Right ventricle myocardium superior (tissue), 1 donor: ENCODE measurements at regions of chr6 and their contacts with region 1.

Region 1: DNA sequence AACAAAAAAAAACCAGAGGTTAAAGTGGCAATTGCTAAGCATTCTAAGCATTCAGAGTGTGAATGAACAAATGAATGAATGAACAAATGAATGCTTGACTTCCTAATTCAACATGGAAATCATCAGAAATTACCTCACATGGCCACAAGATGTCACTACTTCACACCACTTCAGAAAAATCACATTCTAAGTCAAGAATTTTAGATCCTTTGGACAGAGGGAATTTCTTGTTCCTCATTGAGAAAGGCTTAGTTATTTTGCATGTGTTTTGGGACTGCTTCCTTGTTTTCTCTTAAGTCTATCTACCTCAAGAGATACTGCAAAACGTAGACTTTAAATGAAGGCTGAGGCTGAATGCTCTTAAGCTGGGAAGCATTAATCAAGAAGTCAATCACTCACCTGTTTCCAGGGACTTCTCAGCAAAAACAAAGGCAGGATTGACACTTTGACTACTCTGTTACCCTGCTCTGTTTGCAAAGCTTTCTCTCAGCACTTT is 120.2 kb downstream of the MBOAT1 start:
- DNase-seq: no peak
- ATAC-seq: peak; percentile 58

Region 2: DNA sequence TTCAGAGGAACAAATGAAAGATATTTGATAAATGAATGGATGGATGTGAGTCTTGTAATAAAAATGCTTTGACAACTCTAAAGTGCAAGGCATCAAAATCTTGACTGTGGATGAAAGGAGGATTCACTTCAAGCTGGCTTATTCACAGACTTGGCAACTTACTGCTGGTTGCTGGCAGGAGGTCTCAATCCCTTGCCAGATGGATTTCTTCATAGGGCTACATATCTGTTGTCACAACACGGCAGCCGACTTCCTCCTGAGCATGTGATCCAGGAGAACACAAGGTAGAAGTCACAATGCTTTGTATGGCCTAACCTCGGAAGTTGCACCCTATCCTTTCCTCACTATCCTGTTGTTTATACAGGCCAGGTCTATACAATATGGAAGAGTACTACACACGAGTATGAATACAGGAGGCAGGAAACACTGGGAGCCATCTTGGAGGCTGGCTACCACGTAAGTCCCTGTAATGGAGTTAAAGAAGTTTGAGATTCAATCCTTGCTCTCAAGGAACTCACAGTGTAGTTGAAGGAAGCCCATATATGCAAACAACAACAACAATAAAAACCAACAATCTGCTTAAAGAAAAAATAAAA is 157.0 kb before region 1 on chr6:
- intact Hi-C with region 1: no loop called
- DNase-seq: no peak
- ATAC-seq: no peak

Region 3: DNA sequence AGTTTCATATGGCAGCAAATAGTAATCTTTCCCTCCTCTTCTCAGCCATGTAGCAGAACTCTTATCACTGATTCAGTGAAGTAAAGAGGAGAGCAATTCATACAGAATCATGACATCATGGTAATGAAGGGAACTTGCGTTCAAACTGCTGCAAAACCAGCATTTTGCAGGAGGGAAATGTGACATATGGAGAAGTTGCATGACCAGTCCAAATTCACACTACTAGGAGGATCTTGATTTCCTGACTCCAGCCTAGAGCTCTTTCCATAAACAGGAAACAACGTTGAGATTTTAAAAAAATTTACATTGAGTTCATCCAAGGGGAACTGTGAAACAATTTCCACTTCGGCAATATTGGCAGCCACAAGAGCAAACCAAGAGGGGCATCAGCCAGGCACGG is 56.3 kb after region 1 on chr6:
- intact Hi-C with region 1: no loop called
- DNase-seq: no peak
- ATAC-seq: peak; percentile 45

Region 4: DNA sequence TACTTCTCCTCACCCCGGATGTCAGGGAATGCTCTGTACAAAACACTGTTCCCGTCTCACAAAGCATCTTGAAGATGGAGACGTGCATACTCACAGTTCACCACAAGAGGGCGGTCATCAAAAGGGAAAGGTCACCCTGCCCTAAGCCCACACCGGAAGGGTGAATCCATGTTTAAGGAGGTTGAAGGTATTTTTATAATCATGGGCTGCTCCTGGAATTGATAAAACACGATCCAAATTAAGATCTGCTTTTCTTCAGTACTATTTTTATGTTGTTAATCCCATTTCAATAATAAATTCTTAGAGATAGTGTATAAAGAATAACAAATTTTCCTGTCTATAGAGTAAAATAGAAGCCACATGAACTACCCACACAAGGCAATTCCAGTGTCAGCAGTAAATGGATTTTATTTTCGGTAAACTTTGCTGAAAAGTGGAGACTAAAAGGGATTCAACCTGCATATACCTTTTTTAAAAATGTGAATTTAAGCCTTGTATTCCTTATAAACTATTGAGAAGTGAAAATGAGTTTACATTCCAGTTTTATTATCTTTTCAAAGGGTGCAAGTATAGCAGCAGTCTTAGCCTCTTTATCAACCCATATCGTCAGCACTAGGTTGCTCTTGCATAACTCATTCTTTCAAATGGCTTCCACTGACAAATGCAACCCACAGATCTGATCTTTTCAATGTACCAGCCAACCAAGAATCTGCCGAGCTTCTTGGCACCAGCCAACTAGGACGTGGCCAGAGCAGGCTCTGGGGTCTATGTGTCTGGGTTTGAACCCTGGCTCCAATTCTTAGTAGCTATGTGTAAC is 199.9 kb after region 1 on chr6:
- intact Hi-C with region 1: loop called (anchors 5 kb)
- DNase-seq: peak; percentile 59
- ATAC-seq: peak; percentile 96

Region 5: DNA sequence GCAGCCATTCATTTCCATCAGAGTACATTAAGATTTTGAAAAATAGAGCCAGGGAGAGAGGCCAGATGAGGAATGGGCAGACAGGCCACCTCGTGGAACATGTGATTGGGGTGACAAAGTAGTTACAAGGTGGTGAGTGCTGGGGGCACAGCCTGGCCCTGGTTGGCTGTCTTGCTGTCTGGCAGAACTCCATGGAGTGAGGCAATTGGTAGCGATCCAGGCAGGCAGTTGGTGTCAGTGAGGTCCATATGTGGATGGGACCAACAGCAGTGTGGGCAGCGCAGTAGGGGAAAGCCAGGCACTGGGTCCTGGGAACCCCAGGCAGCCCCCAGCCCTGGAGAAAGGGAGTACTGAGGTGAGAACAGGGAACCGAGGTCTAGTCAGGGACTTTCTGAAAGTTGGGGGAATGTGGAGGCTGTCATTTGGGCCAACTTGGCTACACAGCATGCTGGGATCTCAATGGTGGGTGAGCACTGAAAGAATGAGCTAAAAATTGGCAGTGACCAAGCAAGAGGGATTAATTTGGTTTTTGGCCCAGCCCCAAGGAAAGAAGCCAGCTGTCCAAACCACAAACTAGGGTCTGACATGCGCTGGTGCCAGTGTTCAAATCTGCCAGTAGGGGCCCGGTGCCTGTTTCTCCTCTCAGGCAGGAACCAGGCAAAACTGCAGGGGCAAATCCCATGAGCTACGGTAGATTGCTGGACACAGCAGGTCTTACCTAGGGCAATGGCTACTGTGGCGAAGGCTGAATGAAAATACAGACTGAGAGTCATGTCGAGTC is 248.1 kb after region 1 on chr6:
- intact Hi-C with region 1: no loop called
- DNase-seq: no peak
- ATAC-seq: no peak

Region 6: GRCh38 chr6:20417819-20418218 is 325.7 kb after region 1 on chr6:
- intact Hi-C with region 1: loop called (anchors 10 kb)
- DNase-seq: no peak
- ATAC-seq: no peak

Region 7: GRCh38 chr6:20534295-20535262 is 442.5 kb after region 1 on chr6 and contains the start of gene CDKAL1:
- intact Hi-C with region 1: loop called (anchors 5 kb)
- DNase-seq: peak; percentile 93
- ATAC-seq: peak; percentile 98
- total RNA-seq, gene CDKAL1: 10.2 TPM